CD4-positive, alpha-beta T cell (primary cell): ENCODE measurements at regions of chr17 and their contacts with region 1.

Region 1: DNA sequence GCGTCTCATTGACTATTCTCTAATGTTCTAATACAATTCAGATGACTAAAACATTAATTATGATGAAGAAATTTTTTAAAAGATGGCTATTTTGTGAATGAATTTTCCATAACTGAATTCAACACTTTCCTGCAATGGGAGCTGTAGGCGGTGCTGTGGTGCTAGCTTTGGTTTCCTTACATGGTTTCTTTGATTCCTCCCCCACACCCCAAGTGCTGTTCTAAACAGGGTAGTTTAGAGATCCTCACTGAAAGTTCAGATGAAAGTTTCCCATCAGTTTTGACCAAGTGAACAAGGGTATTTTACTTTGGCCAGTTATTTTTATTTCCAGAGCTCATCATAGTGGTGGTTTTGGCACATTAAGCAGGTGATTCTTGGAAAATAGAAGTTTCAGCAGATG is 26.0 kb upstream of the MRC2 start:
- DNase-seq: no peak
- ATAC-seq: no peak
- H3K4me3 ChIP-seq: no peak overlapping the region
- H3K4me3 Mint-ChIP-seq: no peak overlapping the region
- H3K27ac ChIP-seq: no peak overlapping the region
- H3K27ac Mint-ChIP-seq: peak overlapping the region; percentile 24
- H3K4me1 ChIP-seq: no peaks in the 10 kb centered on the region
- H3K4me1 Mint-ChIP-seq: no peaks in the 10 kb centered on the region
- H3K27me3 ChIP-seq: no peaks in the 10 kb centered on the region
- H3K27me3 Mint-ChIP-seq: no peaks in the 10 kb centered on the region
- CTCF ChIP-seq: no peak

Region 2: DNA sequence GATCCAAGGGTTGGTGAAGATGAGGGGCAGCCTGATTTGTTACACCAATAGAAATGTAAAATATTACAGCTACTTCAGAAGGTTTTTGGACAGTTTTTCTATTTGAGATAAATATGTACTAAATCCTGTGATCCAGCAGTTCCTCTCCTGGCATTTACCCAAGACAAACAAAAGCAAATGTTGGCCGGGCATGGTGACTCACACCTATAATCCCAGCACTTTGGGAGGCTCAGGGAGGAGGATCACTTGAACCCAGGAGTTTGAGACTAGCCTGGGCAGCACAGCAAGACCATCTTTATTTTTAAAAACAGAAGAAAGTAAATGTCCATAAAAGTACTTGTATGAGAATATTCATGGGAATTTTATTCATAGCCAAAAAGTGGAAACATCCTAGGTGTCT is 38.8 kb before region 1 on chr17:
- CTCF ChIA-PET with region 1: no interaction called
- POLR2A ChIA-PET with region 1: no interaction called
- intact Hi-C with region 1: loop called in 1 of 2 experiments (anchors 10 kb)
- DNase-seq: no peak
- ATAC-seq: no peak
- H3K4me3 ChIP-seq: no peak overlapping the region
- H3K4me3 Mint-ChIP-seq: no peak overlapping the region
- H3K27ac ChIP-seq: no peak overlapping the region
- H3K27ac Mint-ChIP-seq: no peak overlapping the region
- H3K4me1 ChIP-seq: no peaks in the 10 kb centered on the region
- H3K4me1 Mint-ChIP-seq: peaks cover 17% of the 10 kb centered on the region
- H3K27me3 ChIP-seq: no peaks in the 10 kb centered on the region
- H3K27me3 Mint-ChIP-seq: no peaks in the 10 kb centered on the region
- CTCF ChIP-seq: no peak

Region 3: DNA sequence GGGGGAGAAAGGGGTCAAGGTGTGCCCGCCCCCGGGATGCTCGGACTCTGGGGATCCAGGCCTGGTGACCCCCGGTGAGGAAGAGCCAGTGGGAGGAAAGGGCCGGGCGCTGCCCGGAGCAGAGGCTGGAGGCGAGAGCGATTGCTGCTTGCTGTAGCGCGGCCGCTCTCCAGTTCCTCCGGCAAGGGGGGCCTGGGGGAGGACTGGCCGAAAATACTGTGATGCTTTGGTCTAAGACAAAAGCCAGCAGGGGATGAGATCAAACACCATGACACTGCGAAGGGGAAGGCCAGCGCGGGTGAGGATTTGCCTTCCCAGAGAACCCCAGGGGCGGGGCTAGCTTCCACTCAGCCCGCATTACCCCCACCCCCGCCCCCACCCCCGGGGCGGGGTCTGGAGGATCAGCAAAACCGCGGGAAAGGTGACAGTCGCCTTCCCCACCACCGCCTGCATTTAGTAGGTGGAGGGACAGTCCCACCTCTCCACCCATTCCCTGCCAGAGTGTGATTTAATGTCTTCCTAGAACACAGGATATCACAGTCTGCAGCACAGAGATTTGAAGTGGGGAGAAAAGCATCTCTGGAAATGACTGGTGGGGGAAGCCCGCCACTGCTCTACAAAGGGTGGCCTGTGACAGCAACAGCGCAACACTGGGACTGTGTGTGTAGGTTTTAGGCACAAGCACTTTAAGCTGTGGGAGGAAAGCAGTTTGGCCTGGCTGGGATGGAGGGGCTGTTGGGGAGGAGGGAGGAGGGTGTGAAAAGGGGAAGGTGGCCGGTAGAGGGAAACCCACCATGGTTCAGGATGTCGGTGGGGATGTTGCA is 51.7 kb after region 1 on chr17:
- CTCF ChIA-PET with region 1: no interaction called
- POLR2A ChIA-PET with region 1: no interaction called
- intact Hi-C with region 1: no loop called
- DNase-seq: peak in 13 of 14 experiments; percentile 9 to 75 (median 48)
- ATAC-seq: peak; percentile 78
- H3K4me3 ChIP-seq: peak overlapping the region; percentile 73
- H3K4me3 Mint-ChIP-seq: peak overlapping the region; percentile 56
- H3K27ac ChIP-seq: no peak overlapping the region
- H3K27ac Mint-ChIP-seq: peak overlapping the region; percentile 6
- H3K4me1 ChIP-seq: peaks cover 21% of the 10 kb centered on the region
- H3K4me1 Mint-ChIP-seq: peaks cover 20% of the 10 kb centered on the region
- H3K27me3 ChIP-seq: no peaks in the 10 kb centered on the region
- H3K27me3 Mint-ChIP-seq: no peaks in the 10 kb centered on the region
- CTCF ChIP-seq: no peak

Region 4: DNA sequence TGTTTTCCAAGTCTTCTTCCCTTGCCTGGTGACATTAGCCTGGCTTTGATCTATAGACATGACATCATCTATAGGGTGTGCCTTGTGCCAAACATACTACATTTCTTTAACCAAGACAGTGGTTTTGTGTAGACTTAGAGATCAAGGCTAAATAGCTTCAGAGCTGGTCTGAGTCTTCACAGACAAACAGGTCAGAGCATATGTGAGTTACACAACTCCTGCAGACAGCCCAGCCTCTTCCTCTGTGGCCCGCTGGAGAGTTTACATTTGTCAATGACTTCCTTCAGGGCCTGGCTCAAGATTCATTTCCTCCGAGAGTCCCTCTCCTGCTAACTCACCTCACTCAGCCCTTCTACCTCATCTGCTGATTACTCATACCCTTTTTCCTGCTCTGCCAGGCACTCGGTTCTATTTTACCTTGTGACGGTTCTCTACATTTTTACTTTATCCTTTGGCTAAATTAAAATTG is 291.4 kb after region 1 on chr17:
- CTCF ChIA-PET with region 1: no interaction called
- POLR2A ChIA-PET with region 1: no interaction called
- intact Hi-C with region 1: no loop called
- DNase-seq: peak in 7 of 14 experiments; percentile 0 to 68 (median 21)
- ATAC-seq: peak; percentile 60
- H3K4me3 ChIP-seq: no peak overlapping the region
- H3K4me3 Mint-ChIP-seq: no peak overlapping the region
- H3K27ac ChIP-seq: no peak overlapping the region
- H3K27ac Mint-ChIP-seq: peak overlapping the region; percentile 49
- H3K4me1 ChIP-seq: no peaks in the 10 kb centered on the region
- H3K4me1 Mint-ChIP-seq: peaks cover 10% of the 10 kb centered on the region
- H3K27me3 ChIP-seq: peaks cover 0 to 3% of the 10 kb centered on the region in 2 experiments
- H3K27me3 Mint-ChIP-seq: peaks cover 19% of the 10 kb centered on the region
- CTCF ChIP-seq: no peak